BJ (cell line): ENCODE measurements at regions of chr14 and their contacts with region 1.

Region 1: DNA sequence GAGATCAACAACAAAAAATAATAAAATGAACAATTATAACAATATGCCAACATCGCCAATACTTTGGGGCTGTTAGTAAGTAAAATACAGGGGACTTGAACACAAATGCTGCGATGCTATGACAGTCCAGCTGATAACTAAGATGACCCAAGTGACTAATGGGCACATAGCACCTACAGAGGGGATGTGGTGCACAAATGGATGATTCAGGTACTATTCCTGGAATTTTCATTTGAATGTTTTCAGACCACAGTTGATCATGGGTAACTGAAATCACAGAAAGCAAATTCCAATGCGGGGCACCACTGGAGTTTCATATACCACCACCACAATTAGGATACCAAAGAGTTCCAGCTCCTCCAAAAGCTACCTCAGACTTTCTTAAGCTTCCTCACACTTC is 82.9 kb downstream of the RCOR1 start:
- DNase-seq: no peak
- H3K4me3 ChIP-seq: no peak overlapping the region
- H3K27me3 ChIP-seq: no peaks in the 10 kb centered on the region
- CTCF ChIP-seq: no peak

Region 2: GRCh38 chr14:102548616-102549240 is 126.7 kb before region 1 on chr14:
- CTCF ChIA-PET with region 1: no interaction called
- POLR2A ChIA-PET with region 1: interaction called, 23 read pairs
- DNase-seq: no peak
- H3K4me3 ChIP-seq: no peak overlapping the region
- H3K27me3 ChIP-seq: peaks cover 2% of the 10 kb centered on the region; the same call in 1 of the 2 replicates
- CTCF ChIP-seq: no peak